Right ventricle myocardium inferior (tissue), 1 donor: ENCODE measurements at regions of chr10 and their contacts with region 1.

Region 1: GRCh38 chr10:95430231-95430951 is 130.8 kb downstream of the SORBS1 start:
- DNase-seq: no peak
- ATAC-seq: peak; percentile 68

Region 2: DNA sequence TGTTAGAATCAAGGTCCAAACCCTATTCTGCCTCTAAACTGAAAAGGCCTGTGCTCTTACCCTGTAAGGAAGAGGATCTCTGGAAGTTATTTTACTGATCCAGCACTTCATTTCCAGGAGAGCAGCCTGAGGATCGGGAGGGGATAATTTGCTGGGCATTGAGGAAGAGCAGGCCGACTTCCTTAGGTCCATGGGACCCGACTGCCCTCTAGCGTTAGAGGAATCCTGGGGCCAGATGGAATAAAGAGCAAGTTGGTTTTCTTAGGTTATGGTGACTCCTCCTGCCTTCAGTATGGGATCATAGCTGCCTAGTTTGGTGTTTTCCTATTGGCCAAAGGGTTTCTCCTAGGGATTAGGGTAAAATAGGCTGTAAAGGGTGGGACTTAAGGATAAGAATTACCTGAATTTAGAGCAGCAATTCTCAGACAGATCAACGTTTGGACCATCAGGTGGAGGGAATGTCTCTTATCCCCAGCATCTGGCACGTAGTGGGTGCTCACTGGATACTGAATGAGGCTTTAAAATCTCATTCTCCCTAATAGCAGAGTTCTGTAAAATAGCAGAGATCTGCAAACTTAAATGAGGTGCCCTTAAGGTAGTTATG is 170.8 kb after region 1 on chr10:
- intact Hi-C with region 1: loop called (anchors 1 kb)
- DNase-seq: no peak
- ATAC-seq: peak; percentile 93